PC-3 (cell line): ENCODE measurements at regions of chr12 and their contacts with region 1.

Region 1: GRCh38 chr12:120079411-120080026 is 37.0 kb downstream of the RAB35 start:
- DNase-seq: peak; percentile 98
- ATAC-seq: peak; percentile 91
- H3K4me3 ChIP-seq: peak overlapping the region; percentile 27
- H3K27ac ChIP-seq: peak overlapping the region; percentile 95
- H3K4me1 ChIP-seq: peaks cover 28% of the 10 kb centered on the region
- H3K27me3 ChIP-seq: no peaks in the 10 kb centered on the region
- CTCF ChIP-seq: no peak

Region 2: DNA sequence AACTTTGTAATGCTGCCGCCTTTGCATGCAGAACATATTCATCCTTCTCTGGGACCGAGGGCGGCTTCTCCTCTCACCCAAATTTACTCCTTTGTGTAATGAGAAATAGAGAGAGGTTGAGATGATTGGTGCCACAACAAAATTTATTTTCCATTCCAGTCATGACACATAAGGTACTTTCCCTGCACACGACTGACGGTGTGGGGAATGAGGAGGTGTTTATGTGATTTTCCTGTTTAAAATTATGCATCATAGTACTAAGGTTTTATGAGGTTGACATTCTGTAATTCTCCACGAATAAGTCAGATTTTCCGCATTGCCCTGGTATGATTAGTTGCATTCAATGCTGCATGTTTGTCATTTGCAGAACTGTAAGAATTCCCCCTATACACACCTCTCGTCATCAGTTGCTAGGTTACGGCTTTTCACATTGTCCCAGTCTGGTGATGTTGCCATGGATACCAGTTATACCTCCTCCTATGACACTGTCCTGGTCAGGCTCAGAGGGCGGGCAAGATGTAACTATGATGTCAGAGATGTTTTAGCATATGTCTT is 67.4 kb before region 1 on chr12:
- CTCF ChIA-PET with region 1: no interaction called
- POLR2A ChIA-PET with region 1: no interaction called
- intact Hi-C with region 1: loop called (anchors 1 kb)
- DNase-seq: peak; percentile 70
- ATAC-seq: peak; percentile 80
- H3K4me3 ChIP-seq: no peak overlapping the region
- H3K27ac ChIP-seq: no peak overlapping the region
- H3K4me1 ChIP-seq: peaks cover 15% of the 10 kb centered on the region
- H3K27me3 ChIP-seq: no peaks in the 10 kb centered on the region
- CTCF ChIP-seq: no peak

Region 3: DNA sequence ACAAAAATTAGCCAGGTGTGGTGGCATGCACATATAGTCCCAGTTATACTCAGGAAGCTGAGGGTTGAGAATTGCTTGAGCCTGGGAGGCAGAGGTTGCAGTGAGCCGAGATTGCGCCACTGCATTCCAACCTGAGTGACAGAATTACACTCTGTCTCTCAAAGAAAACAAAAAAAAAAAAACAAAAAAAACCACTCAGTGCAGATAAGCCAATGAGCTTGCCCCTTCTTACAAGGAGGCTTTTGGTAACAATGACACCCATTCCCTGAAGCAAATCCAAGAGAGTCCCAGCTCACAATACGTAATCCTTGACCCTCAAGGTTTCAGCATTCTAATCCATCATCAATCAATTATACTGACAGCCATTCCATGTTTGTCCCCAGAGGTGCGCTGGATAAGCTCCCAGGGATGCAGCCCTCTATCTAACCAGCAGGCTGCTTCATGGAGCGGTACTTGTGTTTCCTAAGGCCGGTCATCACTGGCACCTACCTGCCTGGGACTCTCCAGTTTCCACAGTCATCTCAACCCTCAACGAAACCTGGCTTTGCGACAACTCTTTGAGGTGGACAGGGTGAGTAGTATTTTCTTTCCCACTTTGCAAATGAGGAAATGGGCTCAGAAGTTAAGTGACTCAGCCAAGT is 102.6 kb after region 1 on chr12:
- CTCF ChIA-PET with region 1: no interaction called
- POLR2A ChIA-PET with region 1: no interaction called
- intact Hi-C with region 1: no loop called
- DNase-seq: peak; percentile 92
- ATAC-seq: peak; percentile 82
- H3K4me3 ChIP-seq: no peak overlapping the region
- H3K27ac ChIP-seq: peak overlapping the region; percentile 72
- H3K4me1 ChIP-seq: peaks cover 24% of the 10 kb centered on the region
- H3K27me3 ChIP-seq: no peaks in the 10 kb centered on the region
- CTCF ChIP-seq: no peak; the same call in 1 of the 2 replicates